ENCODE measurements at regions of chr9 and their contacts with region 1.

Region 1: DNA sequence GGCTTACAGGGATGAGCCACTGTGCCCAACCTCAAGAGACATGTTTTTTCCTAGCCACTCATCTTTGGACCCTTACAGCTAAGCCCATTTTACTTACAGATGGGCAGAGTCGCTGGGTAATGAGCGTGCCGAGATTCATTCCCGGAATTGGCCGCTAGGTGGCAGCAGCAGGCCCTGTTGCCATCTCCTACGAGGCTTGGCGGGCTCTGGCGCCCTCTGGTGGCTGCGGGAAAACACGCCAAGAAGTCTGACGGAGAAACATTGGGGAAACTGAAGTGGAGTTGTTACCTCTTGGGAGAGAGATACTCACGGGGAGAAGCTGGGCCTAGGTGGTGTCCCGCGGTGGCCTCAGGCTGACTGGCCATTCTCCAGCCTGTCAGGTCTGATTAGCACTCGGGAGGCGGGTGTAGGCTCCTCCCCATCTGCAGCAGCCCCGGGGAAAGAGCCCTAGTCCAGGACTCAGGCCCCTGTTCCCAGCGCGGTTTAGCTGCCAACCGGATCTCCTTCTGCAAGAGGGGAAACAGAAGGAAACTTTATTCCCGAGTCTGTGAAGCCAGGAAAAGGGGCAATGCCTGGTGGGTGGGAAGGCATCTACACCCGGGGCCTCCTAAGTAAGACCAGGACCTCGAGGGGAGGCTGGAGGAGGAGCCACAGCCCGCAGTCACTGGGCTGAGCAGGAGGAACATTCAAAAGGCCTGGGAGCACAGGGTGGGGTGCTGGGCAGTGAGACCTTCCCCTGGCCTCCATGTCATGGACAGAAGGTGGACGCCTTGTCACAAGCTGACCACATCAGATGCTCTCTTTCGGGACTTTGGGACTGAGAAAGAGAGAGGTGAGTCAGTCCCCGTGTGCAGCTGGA is 9.7 kb downstream of the PTGES2 start:
- DNase-seq: peak; percentile 88 to 93 (median 91)
- H3K4me3 ChIP-seq: no peak overlapping the region
- H3K4me3 Mint-ChIP-seq: peak overlapping the region in 2 of 8 donors; percentile 48 to 50
- H3K27ac ChIP-seq: no peak overlapping the region
- H3K27ac Mint-ChIP-seq: peak overlapping the region in 6 of 7 donors; percentile 9 to 91 (median 61)
- H3K4me1 ChIP-seq: peaks cover 6% of the 10 kb centered on the region
- H3K4me1 Mint-ChIP-seq: peaks cover 3 to 7% (median 5%) of the 10 kb centered on the region in 4 donors
- H3K27me3 ChIP-seq: no peaks in the 10 kb centered on the region
- H3K27me3 Mint-ChIP-seq: no peaks in the 10 kb centered on the region

Region 2: DNA sequence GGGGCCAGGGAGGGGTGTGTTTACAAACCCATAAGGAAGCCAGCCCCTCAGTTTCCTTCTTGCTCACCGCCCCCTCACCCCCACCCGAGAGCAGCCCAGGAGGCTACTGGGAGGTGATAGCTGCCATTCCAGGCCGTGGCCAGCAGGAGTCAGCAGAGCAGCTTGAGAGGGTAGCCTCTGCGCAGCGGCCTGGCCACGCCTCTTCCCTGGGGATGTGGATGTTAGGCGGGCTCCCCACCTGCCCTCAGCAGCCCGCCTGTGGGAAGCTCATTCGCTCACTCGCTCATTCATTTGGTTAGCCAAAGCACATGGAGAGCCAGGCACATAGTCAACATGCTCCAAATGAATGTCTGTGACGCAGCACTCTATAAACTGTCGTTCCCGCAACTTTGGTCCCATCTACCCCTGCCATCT is 174.1 kb before region 1 on chr9:
- CTCF ChIA-PET with region 1: interaction called, 4 read pairs
- POLR2A ChIA-PET with region 1: no interaction called
- intact Hi-C with region 1: loop called (anchors 1 kb)
- DNase-seq: peak; percentile 66 to 76 (median 72)
- H3K4me3 ChIP-seq: no peak overlapping the region
- H3K4me3 Mint-ChIP-seq: no peak overlapping the region
- H3K27ac ChIP-seq: no peak overlapping the region
- H3K27ac Mint-ChIP-seq: peak overlapping the region; percentile 78 to 93 (median 88)
- H3K4me1 ChIP-seq: peaks cover 30% of the 10 kb centered on the region
- H3K4me1 Mint-ChIP-seq: peaks cover 16 to 50% (median 23%) of the 10 kb centered on the region in 4 donors
- H3K27me3 ChIP-seq: no peaks in the 10 kb centered on the region
- H3K27me3 Mint-ChIP-seq: no peaks in the 10 kb centered on the region

Region 3: DNA sequence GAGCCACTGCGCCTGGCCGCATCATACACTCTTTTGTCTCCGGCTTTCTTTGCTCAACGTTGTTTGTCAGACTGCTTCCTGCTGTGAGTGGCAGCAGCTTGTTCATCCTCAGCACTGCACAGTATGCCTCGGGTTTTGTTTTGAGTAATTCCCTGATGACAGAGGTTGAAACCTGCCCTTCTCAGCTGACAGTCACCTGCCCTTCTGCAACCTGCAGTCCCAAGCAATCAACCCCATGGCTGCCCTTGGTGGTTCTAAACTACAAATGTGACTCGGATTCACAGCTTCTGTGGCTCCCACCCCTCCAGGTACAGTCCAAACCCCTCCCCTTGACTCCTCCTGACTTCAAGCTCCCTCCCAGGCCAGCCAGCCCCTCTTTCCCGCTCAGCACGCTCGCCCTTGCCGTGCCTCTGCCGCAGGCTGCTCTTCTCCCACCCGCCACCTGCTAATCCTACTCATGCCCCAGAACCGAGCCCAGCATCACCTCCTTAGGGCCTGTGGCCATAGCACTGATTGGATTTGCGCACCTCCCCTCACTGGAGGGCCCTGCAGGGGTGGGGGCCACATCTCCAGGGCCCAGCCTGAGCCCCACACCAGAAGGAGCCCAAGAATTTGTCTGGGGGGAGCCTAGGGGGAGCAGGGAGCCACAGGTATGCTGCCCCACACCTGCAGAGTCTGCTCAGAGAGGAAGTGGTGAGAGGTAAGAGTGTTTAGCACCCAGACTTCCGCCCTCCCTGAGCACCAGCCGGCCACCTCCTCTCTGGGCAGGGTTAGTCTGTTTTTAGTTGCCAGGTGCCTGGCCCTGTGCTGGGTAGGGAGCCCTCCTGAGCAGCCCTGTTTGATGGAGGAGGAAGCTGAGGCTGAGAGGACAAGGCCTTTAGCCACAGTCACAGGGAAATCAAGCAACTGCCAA is 147.2 kb before region 1 on chr9:
- CTCF ChIA-PET with region 1: interaction called, 3 read pairs
- POLR2A ChIA-PET with region 1: no interaction called
- intact Hi-C with region 1: loop called (anchors 5 kb)
- DNase-seq: peak; percentile 72 to 89 (median 73)
- H3K4me3 ChIP-seq: peak overlapping the region; percentile 61 to 76
- H3K4me3 Mint-ChIP-seq: peak overlapping the region; percentile 78 to 98 (median 93)
- H3K27ac ChIP-seq: peak overlapping the region; percentile 78
- H3K27ac Mint-ChIP-seq: peak overlapping the region; percentile 81 to 99 (median 97)
- H3K4me1 ChIP-seq: peaks cover 100% of the 10 kb centered on the region
- H3K4me1 Mint-ChIP-seq: peaks cover 73 to 100% (median 87%) of the 10 kb centered on the region in 4 donors
- H3K27me3 ChIP-seq: no peaks in the 10 kb centered on the region
- H3K27me3 Mint-ChIP-seq: no peaks in the 10 kb centered on the region

Region 4: GRCh38 chr9:128011071-128011817 is 106.6 kb before region 1 on chr9:
- CTCF ChIA-PET with region 1: no interaction called
- POLR2A ChIA-PET with region 1: no interaction called
- intact Hi-C with region 1: no loop called
- DNase-seq: no peak
- H3K4me3 ChIP-seq: no peak overlapping the region
- H3K4me3 Mint-ChIP-seq: no peak overlapping the region
- H3K27ac ChIP-seq: no peak overlapping the region
- H3K27ac Mint-ChIP-seq: peak overlapping the region in 6 of 7 donors; percentile 10 to 75 (median 59)
- H3K4me1 ChIP-seq: peaks cover 48% of the 10 kb centered on the region
- H3K4me1 Mint-ChIP-seq: peaks cover 31 to 55% (median 41%) of the 10 kb centered on the region in 4 donors
- H3K27me3 ChIP-seq: no peaks in the 10 kb centered on the region
- H3K27me3 Mint-ChIP-seq: no peaks in the 10 kb centered on the region

Region 5: GRCh38 chr9:128094166-128094967 is 23.5 kb before region 1 on chr9:
- CTCF ChIA-PET with region 1: interaction called, 17 read pairs
- POLR2A ChIA-PET with region 1: no interaction called
- intact Hi-C with region 1: no loop called
- DNase-seq: peak; percentile 57 to 85 (median 69)
- H3K4me3 ChIP-seq: no peak overlapping the region
- H3K4me3 Mint-ChIP-seq: peak overlapping the region in 6 of 8 donors; percentile 15 to 84 (median 64)
- H3K27ac ChIP-seq: peak overlapping the region; percentile 57
- H3K27ac Mint-ChIP-seq: peak overlapping the region; percentile 93 to 98 (median 94)
- H3K4me1 ChIP-seq: peaks cover 85% of the 10 kb centered on the region
- H3K4me1 Mint-ChIP-seq: peaks cover 33 to 87% (median 67%) of the 10 kb centered on the region in 4 donors
- H3K27me3 ChIP-seq: no peaks in the 10 kb centered on the region
- H3K27me3 Mint-ChIP-seq: no peaks in the 10 kb centered on the region

Region 6: DNA sequence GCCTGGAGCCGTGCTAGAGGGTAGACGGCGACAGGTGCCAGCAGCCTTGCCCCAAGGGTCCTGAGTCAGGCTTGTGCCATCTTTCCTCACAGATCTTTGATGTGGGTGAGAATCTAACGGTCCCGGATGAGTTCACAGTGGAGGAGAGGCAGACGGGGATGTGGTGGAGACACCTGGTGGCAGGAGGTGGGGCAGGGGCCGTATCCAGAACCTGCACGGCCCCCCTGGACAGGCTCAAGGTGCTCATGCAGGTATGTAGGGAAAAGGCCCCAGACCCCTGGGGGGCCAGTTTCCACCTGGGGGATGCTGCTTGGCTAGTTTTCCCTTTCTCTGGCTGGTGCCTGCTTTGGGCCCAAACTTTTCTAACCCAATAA is 14.3 kb before region 1 on chr9:
- CTCF ChIA-PET with region 1: interaction called, 13 read pairs
- POLR2A ChIA-PET with region 1: no interaction called
- intact Hi-C with region 1: no loop called
- DNase-seq: peak in 4 of 5 donors; percentile 29 to 41 (median 31)
- H3K4me3 ChIP-seq: no peak overlapping the region
- H3K4me3 Mint-ChIP-seq: peak overlapping the region in 2 of 8 donors; percentile 17 to 47
- H3K27ac ChIP-seq: no peak overlapping the region
- H3K27ac Mint-ChIP-seq: peak overlapping the region; percentile 77 to 94 (median 84)
- H3K4me1 ChIP-seq: peaks cover 42% of the 10 kb centered on the region
- H3K4me1 Mint-ChIP-seq: peaks cover 14 to 55% (median 30%) of the 10 kb centered on the region in 4 donors
- H3K27me3 ChIP-seq: no peaks in the 10 kb centered on the region
- H3K27me3 Mint-ChIP-seq: no peaks in the 10 kb centered on the region

Region 7: GRCh38 chr9:128218518-128219389 is 100.9 kb after region 1 on chr9:
- CTCF ChIA-PET with region 1: no interaction called
- POLR2A ChIA-PET with region 1: no interaction called
- intact Hi-C with region 1: no loop called
- DNase-seq: peak; percentile 86 to 94 (median 87)
- H3K4me3 ChIP-seq: peak overlapping the region; percentile 31 to 39
- H3K4me3 Mint-ChIP-seq: peak overlapping the region; percentile 63 to 92 (median 82)
- H3K27ac ChIP-seq: no peak overlapping the region
- H3K27ac Mint-ChIP-seq: peak overlapping the region; percentile 54 to 93 (median 75)
- H3K4me1 ChIP-seq: peaks cover 15% of the 10 kb centered on the region
- H3K4me1 Mint-ChIP-seq: peaks cover 7 to 17% (median 12%) of the 10 kb centered on the region in 4 donors
- H3K27me3 ChIP-seq: no peaks in the 10 kb centered on the region
- H3K27me3 Mint-ChIP-seq: no peaks in the 10 kb centered on the region